IMR-90 (cell line): ENCODE measurements at regions of chr12 and their contacts with region 1.

Region 1: DNA sequence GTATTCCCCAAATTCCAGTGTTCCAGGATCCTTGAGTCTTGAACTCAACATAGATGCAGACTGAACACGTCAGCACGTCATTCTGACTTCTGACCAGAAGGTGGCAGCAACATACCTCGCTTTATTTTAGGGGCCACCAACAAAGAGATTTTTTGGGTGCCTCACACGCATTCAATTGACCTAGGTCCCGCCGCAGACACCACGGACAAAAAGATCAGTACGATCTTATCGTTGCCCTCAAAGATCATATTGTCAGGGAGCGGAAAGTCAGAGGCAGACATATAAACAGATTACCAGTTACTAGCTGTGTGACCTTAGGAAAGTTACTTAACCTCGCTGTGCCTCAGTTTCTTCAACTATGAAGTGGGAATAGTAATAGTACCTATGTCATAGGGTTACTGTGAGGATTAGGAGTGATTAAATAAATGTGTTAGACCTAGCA is 6.5 kb upstream of the PRPH start:
- DNase-seq: peak; percentile 55
- ATAC-seq: peak; percentile 88
- H3K4me3 ChIP-seq: no peak overlapping the region
- H3K27ac ChIP-seq: no peak overlapping the region
- H3K4me1 ChIP-seq: no peaks in the 10 kb centered on the region
- H3K27me3 ChIP-seq: peaks cover 18% of the 10 kb centered on the region
- CTCF ChIP-seq: peak; percentile 79
- POLR2A ChIP-seq: no peak
- RAD21 ChIP-seq: peak; percentile 74

Region 2: GRCh38 chr12:49336645-49337584 is 48.5 kb after region 1 on chr12 and contains the start of gene C1QL4:
- CTCF ChIA-PET with region 1: interaction called, 3 read pairs
- POLR2A ChIA-PET with region 1: no interaction called
- dilution Hi-C with region 1: no loop called
- in situ Hi-C with region 1: no loop called
- intact Hi-C with region 1: loop called (anchors 1 kb)
- DNase-seq: peak; percentile 52
- ATAC-seq: peak; percentile 97
- H3K4me3 ChIP-seq: peak within 1 kb of the TSS; percentile 57
- H3K27ac ChIP-seq: no peak within 1 kb of the TSS
- H3K4me1 ChIP-seq: no peaks in the 10 kb centered on the region
- H3K27me3 ChIP-seq: peaks cover 70% of the 10 kb centered on the region
- CTCF ChIP-seq: peak; percentile 82
- POLR2A ChIP-seq: no peak
- RAD21 ChIP-seq: peak; percentile 33
- total RNA-seq, gene C1QL4: 0.18 and 0.28 TPM in 2 replicates

Region 3: GRCh38 chr12:49515266-49515665 is 226.8 kb after region 1 on chr12:
- CTCF ChIA-PET with region 1: interaction called, 5 read pairs
- POLR2A ChIA-PET with region 1: no interaction called
- dilution Hi-C with region 1: no loop called
- in situ Hi-C with region 1: no loop called
- intact Hi-C with region 1: loop called (anchors 2 kb)
- DNase-seq: peak; percentile 90
- ATAC-seq: peak; percentile 86
- H3K4me3 ChIP-seq: no peak overlapping the region
- H3K27ac ChIP-seq: no peak overlapping the region
- H3K4me1 ChIP-seq: peaks cover 5% of the 10 kb centered on the region
- H3K27me3 ChIP-seq: no peaks in the 10 kb centered on the region
- CTCF ChIP-seq: no peak
- POLR2A ChIP-seq: no peak
- RAD21 ChIP-seq: no peak

Region 4: DNA sequence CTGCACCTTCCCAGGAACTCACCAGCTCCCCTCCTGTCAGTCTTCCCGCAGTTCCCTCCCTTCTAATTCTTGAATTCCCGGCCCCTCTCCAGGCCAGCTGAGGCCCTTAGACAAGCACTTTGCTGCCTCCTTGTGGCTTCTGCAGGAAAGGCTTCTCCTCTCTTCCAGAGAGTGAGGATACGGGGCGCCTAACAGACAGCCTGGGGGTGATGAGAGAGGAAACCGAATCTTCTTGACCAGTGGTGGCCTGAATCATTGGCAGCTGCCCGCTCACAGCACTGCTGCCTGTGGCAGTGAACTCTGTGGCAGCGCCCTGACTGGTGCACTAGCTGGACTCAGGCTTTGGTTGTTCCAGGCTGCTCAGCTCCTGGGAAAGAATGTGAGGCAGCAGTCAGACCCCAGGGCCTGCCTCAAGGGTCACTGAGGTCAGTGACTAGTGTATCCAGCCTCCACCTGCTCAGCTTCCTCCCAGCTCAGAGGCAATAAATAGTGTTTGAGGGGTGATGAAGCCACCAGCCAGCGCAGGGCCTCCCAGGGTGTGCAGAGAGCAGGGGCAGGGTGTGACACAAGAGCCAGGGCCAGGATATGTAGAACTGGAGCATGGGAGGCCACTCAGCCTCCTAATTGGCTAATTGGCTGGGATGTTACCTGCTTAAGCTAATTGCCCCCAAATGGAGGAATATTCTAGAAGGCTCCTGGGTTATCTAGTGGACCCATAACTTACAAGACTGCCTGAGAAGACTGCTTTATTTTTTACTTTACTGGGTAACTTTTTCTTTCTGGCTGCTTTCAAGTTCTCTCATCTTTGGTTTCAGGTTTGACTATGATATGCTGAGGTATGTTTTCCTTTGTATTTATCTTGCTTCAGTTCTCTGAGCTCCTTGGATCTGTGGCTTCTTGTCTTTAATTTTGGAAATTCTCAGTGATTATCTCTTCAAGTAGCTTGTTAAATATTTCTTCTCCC is 292.4 kb after region 1 on chr12:
- CTCF ChIA-PET with region 1: interaction called, 3 read pairs
- POLR2A ChIA-PET with region 1: no interaction called
- dilution Hi-C with region 1: no loop called
- in situ Hi-C with region 1: no loop called
- intact Hi-C with region 1: loop called (anchors 2 kb)
- DNase-seq: peak; percentile 77
- ATAC-seq: peak; percentile 97
- H3K4me3 ChIP-seq: no peak overlapping the region
- H3K27ac ChIP-seq: no peak overlapping the region
- H3K4me1 ChIP-seq: peaks cover 2% of the 10 kb centered on the region; the same call in 1 of the 2 replicates
- H3K27me3 ChIP-seq: no peaks in the 10 kb centered on the region
- CTCF ChIP-seq: peak; percentile 84
- POLR2A ChIP-seq: no peak
- RAD21 ChIP-seq: peak; percentile 89